ENCODE measurements at regions of chr5 and their contacts with region 1.

Region 1: GRCh38 chr5:59810041-59810440 is 83.5 kb downstream of the PDE4D start:
- DNase-seq: peak; percentile 54 to 79 (median 71)
- ATAC-seq: peak; percentile 86
- H3K4me3 ChIP-seq: no peak overlapping the region
- H3K27ac ChIP-seq: no peak overlapping the region
- H3K4me1 ChIP-seq: no peaks in the 10 kb centered on the region
- H3K27me3 ChIP-seq: no peaks in the 10 kb centered on the region
- CTCF ChIP-seq: peak; percentile 63 to 87 (median 72)
- EP300 ChIP-seq: no peak
- POLR2A ChIP-seq: no peak
- RAD21 ChIP-seq: peak; percentile 58 to 71

Region 2: DNA sequence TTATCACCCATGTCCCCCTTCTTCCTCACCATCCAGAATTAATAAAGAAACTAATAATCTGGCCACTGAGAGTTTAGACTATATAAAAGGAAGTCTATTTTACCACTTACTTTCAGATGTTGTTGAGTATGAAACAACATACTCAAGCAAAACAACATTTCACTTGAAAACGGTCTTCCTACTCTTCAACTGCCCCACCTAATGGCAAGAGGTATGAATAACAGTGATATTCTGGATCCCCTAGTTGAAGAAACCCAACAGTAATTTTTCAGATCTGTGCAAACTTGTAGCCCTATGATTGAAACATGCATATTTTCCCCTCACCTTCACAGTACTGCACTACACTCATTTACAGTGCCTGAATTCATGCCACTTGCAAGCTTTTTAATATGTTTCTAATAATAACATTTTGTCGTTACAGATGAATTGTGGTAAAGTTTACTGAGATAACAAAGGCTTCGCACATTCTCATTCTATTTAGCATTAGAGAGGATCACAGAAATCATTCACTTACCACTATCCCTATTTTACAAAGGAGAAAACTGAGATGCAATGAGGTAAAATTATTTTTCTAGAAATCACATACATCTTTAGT is 351.4 kb after region 1 on chr5:
- CTCF ChIA-PET with region 1: no interaction called
- POLR2A ChIA-PET with region 1: no interaction called
- in situ Hi-C with region 1: no loop called
- intact Hi-C with region 1: loop called (anchors 10 kb)
- DNase-seq: no peak
- ATAC-seq: no peak
- H3K4me3 ChIP-seq: no peak overlapping the region
- H3K27ac ChIP-seq: no peak overlapping the region
- H3K4me1 ChIP-seq: no peaks in the 10 kb centered on the region
- H3K27me3 ChIP-seq: no peaks in the 10 kb centered on the region
- CTCF ChIP-seq: peak in 1 of 3 experiments; percentile 28; a peak in 1 of 6 replicates
- EP300 ChIP-seq: no peak
- POLR2A ChIP-seq: no peak
- RAD21 ChIP-seq: peak in 1 of 2 experiments; percentile 7; a peak in 1 of 4 replicates

Region 3: GRCh38 chr5:60382716-60383115 is 572.7 kb after region 1 on chr5:
- CTCF ChIA-PET with region 1: interaction called, 8 read pairs
- POLR2A ChIA-PET with region 1: no interaction called
- in situ Hi-C with region 1: no loop called
- intact Hi-C with region 1: loop called (anchors 2 kb)
- DNase-seq: peak in 1 of 4 experiments; percentile 10
- ATAC-seq: no peak
- H3K4me3 ChIP-seq: no peak overlapping the region
- H3K27ac ChIP-seq: no peak overlapping the region
- H3K4me1 ChIP-seq: no peaks in the 10 kb centered on the region
- H3K27me3 ChIP-seq: no peaks in the 10 kb centered on the region
- CTCF ChIP-seq: peak in 2 of 3 experiments; percentile 23 to 43; a peak in 2 of 6 replicates
- EP300 ChIP-seq: no peak
- POLR2A ChIP-seq: no peak
- RAD21 ChIP-seq: peak; percentile 37 to 57; a peak in 3 of 4 replicates

Region 4: DNA sequence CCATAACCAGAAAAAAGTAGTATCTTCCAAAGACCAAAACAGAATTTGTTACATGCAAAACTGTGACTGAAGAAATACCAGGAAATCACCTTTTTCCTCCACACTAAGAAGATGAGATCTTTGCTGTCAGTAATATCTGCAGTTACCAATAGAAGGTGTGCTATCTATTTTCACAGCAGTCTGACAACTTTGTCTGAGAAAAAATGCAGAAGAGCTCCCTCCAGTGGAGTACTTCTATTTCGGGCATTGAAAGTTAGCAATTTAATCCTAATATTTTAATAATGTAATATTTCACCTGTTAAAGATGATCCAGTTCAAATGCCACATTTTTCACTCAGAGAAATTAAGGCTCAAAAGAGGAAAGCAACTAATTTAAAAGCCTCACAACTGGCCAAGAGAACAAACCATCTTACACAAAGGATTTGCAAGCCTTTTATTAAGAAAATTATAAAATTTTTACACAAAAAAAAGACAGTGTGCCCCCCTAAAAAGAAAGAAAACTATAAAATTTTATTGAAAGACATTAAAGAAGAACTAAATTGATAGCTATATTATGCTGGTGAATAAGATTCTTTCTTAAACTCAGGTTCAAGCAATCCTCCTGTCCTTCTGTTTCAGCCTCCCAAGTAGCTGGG is 839.4 kb after region 1 on chr5:
- CTCF ChIA-PET with region 1: no interaction called
- POLR2A ChIA-PET with region 1: no interaction called
- in situ Hi-C with region 1: no loop called
- intact Hi-C with region 1: loop called (anchors 5 kb)
- DNase-seq: peak in 2 of 4 experiments; percentile 18 to 37
- ATAC-seq: peak; percentile 70
- H3K4me3 ChIP-seq: no peak overlapping the region
- H3K27ac ChIP-seq: no peak overlapping the region
- H3K4me1 ChIP-seq: no peaks in the 10 kb centered on the region; a peak in 1 of 5 replicates
- H3K27me3 ChIP-seq: no peaks in the 10 kb centered on the region
- CTCF ChIP-seq: peak; percentile 53 to 73 (median 71)
- EP300 ChIP-seq: no peak
- POLR2A ChIP-seq: no peak
- RAD21 ChIP-seq: peak; percentile 26 to 51; a peak in 2 of 4 replicates

Region 5: DNA sequence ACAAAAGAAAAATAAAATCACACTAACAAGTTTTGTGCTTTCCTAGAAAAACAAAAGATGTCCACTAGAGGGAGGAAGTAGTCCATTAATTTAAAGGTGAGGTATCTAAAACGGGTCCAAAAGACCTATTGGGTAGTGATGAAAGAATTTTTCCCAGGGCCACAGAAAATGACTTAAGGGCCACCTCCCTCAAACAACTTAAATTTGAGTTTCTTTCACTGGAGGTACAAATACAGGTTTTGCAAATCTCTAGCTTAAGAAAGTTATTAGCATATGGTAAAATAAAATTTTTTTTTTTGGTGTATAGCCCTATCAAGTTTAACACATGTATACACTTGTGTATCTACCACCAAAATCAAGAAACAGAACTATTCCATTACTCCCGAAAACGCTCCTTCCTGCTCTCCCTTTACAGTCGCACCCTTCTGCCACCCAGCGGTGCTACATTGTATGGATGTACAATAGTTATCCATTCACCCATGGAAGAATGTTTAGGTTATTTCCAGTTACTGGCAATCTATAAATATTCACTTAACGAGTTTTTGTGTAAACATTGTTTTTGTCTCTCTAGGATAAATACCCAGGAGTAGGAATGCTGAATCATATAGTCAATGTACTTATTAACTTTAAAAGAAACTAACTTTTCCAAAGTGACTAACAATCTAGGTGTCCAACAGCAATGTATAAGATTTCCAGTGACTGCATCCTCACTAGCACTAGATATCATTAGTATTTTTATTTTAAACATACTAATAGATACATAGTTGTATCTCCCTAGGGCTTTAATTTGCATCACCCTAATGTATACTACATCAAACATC is 868.0 kb after region 1 on chr5:
- CTCF ChIA-PET with region 1: no interaction called
- POLR2A ChIA-PET with region 1: no interaction called
- in situ Hi-C with region 1: loop called (anchors 10 kb)
- intact Hi-C with region 1: no loop called
- DNase-seq: peak; percentile 33 to 50 (median 38)
- ATAC-seq: peak; percentile 75
- H3K4me3 ChIP-seq: no peak overlapping the region
- H3K27ac ChIP-seq: no peak overlapping the region
- H3K4me1 ChIP-seq: peaks cover 2 to 4% of the 10 kb centered on the region in 2 experiments; a peak in 2 of 5 replicates
- H3K27me3 ChIP-seq: no peaks in the 10 kb centered on the region
- CTCF ChIP-seq: peak in 2 of 3 experiments; percentile 49 to 68; a peak in 5 of 6 replicates
- EP300 ChIP-seq: no peak
- POLR2A ChIP-seq: no peak
- RAD21 ChIP-seq: peak; percentile 79

Region 6: GRCh38 chr5:61228691-61229280 is 1418.7 kb after region 1 on chr5:
- CTCF ChIA-PET with region 1: no interaction called
- POLR2A ChIA-PET with region 1: no interaction called
- in situ Hi-C with region 1: loop called (anchors 10 kb)
- intact Hi-C with region 1: no loop called
- DNase-seq: peak in 1 of 4 experiments; percentile 3
- ATAC-seq: peak; percentile 31
- H3K4me3 ChIP-seq: no peak overlapping the region
- H3K27ac ChIP-seq: no peak overlapping the region
- H3K4me1 ChIP-seq: peaks cover 0 to 7% of the 10 kb centered on the region in 2 experiments; a peak in 1 of 5 replicates
- H3K27me3 ChIP-seq: peaks cover 6 to 19% of the 10 kb centered on the region in 2 experiments
- CTCF ChIP-seq: no peak
- EP300 ChIP-seq: no peak
- POLR2A ChIP-seq: no peak
- RAD21 ChIP-seq: no peak